Activated naive CD4-positive, alpha-beta T cell treated with anti-CD3 and anti-CD28 coated beads for 36 hours (primary cell): ENCODE measurements at regions of chr1 and their contacts with region 1.

Region 1: GRCh38 chr1:110106013-110106941 is 6.0 kb upstream of the UBL4B start:
- DNase-seq: peak; percentile 78
- H3K4me3 Mint-ChIP-seq: no peak overlapping the region
- H3K27ac Mint-ChIP-seq: no peak overlapping the region
- H3K4me1 Mint-ChIP-seq: no peaks in the 10 kb centered on the region
- H3K27me3 Mint-ChIP-seq: peaks cover 2% of the 10 kb centered on the region

Region 2: GRCh38 chr1:109947582-109948286 is 158.5 kb before region 1 on chr1:
- CTCF ChIA-PET with region 1: no interaction called
- intact Hi-C with region 1: no loop called
- DNase-seq: no peak
- H3K4me3 Mint-ChIP-seq: no peak overlapping the region
- H3K27ac Mint-ChIP-seq: no peak overlapping the region
- H3K4me1 Mint-ChIP-seq: peaks cover 8% of the 10 kb centered on the region
- H3K27me3 Mint-ChIP-seq: no peaks in the 10 kb centered on the region

Region 3: GRCh38 chr1:110068646-110069403 is 37.5 kb before region 1 on chr1:
- CTCF ChIA-PET with region 1: interaction called, 30 read pairs
- intact Hi-C with region 1: no loop called
- DNase-seq: no peak
- H3K4me3 Mint-ChIP-seq: peak overlapping the region; percentile 30
- H3K27ac Mint-ChIP-seq: no peak overlapping the region
- H3K4me1 Mint-ChIP-seq: peaks cover 14% of the 10 kb centered on the region
- H3K27me3 Mint-ChIP-seq: peaks cover 59% of the 10 kb centered on the region

Region 4: DNA sequence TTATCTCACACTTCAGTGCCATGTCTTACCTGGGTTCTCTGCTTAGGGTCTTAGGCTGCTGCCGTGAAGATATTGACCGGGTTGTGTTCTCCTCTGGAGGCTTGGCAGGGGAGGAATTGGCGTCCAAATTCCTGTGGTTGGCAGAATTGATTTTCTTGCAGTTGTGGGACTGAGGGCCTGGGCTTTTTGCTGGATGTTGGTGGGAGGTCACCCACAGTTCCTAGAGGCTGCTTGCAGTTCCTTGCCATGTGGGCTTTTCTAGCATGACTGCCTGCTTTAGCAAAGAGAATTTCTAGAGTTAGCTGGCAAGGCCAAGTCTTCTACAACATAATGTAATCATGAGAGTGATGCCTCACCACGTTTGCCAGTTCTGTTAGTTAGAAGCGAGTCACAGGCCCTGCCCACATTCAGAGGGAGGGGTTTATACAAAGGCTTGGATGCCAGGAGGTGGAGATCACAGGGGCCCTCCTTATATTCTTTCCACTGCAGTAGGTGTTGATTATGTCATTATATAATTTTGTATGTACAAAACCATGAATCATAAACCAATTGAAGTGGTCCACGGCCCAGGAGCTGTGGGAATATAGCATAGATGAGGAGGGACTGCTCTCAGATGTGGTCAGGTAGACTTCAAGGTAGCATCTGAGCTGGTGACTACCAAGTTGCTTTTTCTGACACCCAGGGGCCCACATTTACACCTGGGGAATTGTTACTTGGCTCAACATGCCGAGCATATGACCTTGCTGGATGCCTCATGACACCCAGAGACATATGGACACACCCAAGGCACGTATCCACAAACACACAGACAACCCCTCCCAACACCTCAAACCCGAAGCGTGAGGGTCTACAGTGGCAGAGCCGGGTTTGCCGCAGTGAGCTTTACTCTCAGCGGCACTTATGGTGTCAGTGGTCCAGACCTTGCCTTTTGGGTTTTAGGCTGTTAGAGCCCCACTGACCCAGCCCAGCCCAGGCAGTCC is 12.6 kb after region 1 on chr1:
- CTCF ChIA-PET with region 1: interaction called, 25 read pairs
- intact Hi-C with region 1: no loop called
- DNase-seq: peak; percentile 50
- H3K4me3 Mint-ChIP-seq: no peak overlapping the region
- H3K27ac Mint-ChIP-seq: no peak overlapping the region
- H3K4me1 Mint-ChIP-seq: peaks cover 4% of the 10 kb centered on the region
- H3K27me3 Mint-ChIP-seq: peaks cover 18% of the 10 kb centered on the region

Region 5: GRCh38 chr1:110125810-110126209 is 19.5 kb after region 1 on chr1:
- CTCF ChIA-PET with region 1: interaction called, 14 read pairs
- intact Hi-C with region 1: no loop called
- DNase-seq: no peak
- H3K4me3 Mint-ChIP-seq: no peak overlapping the region
- H3K27ac Mint-ChIP-seq: no peak overlapping the region
- H3K4me1 Mint-ChIP-seq: no peaks in the 10 kb centered on the region
- H3K27me3 Mint-ChIP-seq: peaks cover 38% of the 10 kb centered on the region